Endothelial cell of umbilical vein (primary cell): ENCODE measurements at regions of chr2 and their contacts with region 1.

Region 1: DNA sequence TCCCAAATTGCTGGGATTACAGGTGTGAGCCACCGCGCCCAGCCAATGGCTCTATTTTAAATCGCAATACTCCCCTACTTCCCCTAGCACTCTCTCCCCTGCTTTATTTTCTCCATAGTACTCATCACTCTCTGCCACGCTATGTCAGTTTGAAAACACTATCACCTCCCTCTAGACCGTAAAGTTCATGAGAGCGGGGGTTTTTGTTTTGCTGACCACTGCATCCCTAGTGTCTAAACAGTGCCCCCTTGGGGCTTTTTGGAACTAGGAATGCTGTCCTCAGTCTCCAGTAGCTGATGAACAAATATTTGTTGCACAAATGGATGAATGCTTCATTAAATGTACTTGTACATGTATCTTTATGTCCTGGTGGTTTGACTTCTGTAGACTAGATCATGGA is 44.1 kb downstream of the ATOH8 start:
- DNase-seq: peak; percentile 60
- H3K4me3 ChIP-seq: no peak overlapping the region
- H3K27ac ChIP-seq: no peak overlapping the region
- H3K4me1 ChIP-seq: peaks cover 15% of the 10 kb centered on the region
- H3K27me3 ChIP-seq: no peaks in the 10 kb centered on the region
- CTCF ChIP-seq: peak; percentile 62 to 70
- POLR2A ChIP-seq: no peak

Region 2: DNA sequence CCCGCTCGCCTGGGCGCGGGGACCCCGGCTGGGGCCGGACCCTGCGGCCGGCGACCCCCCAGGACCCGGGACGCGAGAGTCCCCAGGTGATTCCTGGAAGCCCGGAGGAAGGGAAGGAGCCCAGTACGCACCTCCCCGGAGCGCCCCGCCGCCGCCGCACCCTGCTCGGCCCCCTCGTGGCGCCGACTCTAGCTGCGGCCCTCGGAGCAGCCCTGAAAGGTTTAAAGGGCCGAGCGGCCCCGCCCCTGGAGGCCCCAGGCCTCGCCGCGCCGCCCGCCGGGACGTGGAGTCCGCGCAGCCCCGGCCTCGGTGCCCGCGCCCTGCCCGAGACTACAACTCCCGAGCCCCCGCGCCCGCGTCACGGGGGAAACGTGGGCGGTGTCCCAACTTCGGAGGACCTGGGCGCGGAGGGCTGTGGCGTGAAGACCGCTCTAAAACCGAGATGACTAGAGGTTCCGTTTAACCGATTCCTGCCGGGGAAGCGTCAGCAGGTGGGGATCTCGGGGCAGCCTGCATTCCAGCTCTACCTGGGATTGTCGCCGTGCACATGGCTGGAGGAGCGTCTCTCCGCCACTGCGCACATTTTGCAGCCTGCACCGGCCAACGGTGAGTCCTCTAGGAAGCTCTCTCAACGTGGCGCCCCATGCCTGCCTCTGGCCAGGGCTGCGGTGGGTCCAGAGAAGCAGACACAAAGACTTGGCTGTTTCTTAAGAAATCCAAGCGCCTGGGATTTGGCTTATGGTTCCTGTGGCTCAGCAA is 195.3 kb before region 1 on chr2 and contains the start of gene TMEM150A:
- CTCF ChIA-PET with region 1: no interaction called
- POLR2A ChIA-PET with region 1: no interaction called
- dilution Hi-C with region 1: no loop called
- intact Hi-C with region 1: no loop called
- DNase-seq: peak; percentile 88
- H3K4me3 ChIP-seq: peak within 1 kb of the TSS; percentile 64 to 98 (median 65)
- H3K27ac ChIP-seq: peak within 1 kb of the TSS; percentile 23
- H3K4me1 ChIP-seq: peaks cover 24% of the 10 kb centered on the region
- H3K27me3 ChIP-seq: no peaks in the 10 kb centered on the region
- CTCF ChIP-seq: peak; percentile 32 to 51
- POLR2A ChIP-seq: peak; percentile 87
- total RNA-seq, gene TMEM150A: 14.6 and 17.7 TPM in 2 replicates

Region 3: DNA sequence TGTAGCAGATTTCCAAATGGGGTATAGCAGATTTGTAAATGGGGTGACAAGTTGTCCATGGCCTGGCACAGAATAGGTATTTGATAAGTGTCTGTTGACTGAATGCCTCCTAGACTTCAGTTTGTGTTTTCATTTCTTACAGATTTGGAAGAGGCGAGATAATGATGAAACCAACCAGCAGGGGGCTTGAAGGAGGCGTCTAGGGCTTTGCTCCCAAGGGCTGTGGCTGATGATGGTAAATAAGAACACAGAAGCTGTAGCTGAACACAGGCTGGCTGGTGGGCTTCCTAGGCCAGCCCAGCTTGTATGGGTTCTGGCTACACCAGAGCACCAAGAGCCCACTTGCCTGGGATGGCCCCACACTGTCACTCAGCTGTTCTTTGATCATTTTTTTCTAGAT is 149.3 kb before region 1 on chr2:
- CTCF ChIA-PET with region 1: interaction called, 12 read pairs
- POLR2A ChIA-PET with region 1: no interaction called
- dilution Hi-C with region 1: no loop called
- intact Hi-C with region 1: no loop called
- DNase-seq: peak; percentile 66
- H3K4me3 ChIP-seq: no peak overlapping the region
- H3K27ac ChIP-seq: peak overlapping the region; percentile 42
- H3K4me1 ChIP-seq: peaks cover 16% of the 10 kb centered on the region
- H3K27me3 ChIP-seq: no peaks in the 10 kb centered on the region
- CTCF ChIP-seq: peak; percentile 65 to 72
- POLR2A ChIP-seq: no peak

Region 4: GRCh38 chr2:85741833-85742455 is 56.0 kb before region 1 on chr2:
- CTCF ChIA-PET with region 1: interaction called, 17 read pairs
- POLR2A ChIA-PET with region 1: no interaction called
- dilution Hi-C with region 1: no loop called
- intact Hi-C with region 1: no loop called
- DNase-seq: peak; percentile 87
- H3K4me3 ChIP-seq: peak overlapping the region in 1 of 3 experiments; percentile 3
- H3K27ac ChIP-seq: peak overlapping the region; percentile 97
- H3K4me1 ChIP-seq: peaks cover 30% of the 10 kb centered on the region
- H3K27me3 ChIP-seq: no peaks in the 10 kb centered on the region
- CTCF ChIP-seq: no peak
- POLR2A ChIP-seq: no peak

Region 5: DNA sequence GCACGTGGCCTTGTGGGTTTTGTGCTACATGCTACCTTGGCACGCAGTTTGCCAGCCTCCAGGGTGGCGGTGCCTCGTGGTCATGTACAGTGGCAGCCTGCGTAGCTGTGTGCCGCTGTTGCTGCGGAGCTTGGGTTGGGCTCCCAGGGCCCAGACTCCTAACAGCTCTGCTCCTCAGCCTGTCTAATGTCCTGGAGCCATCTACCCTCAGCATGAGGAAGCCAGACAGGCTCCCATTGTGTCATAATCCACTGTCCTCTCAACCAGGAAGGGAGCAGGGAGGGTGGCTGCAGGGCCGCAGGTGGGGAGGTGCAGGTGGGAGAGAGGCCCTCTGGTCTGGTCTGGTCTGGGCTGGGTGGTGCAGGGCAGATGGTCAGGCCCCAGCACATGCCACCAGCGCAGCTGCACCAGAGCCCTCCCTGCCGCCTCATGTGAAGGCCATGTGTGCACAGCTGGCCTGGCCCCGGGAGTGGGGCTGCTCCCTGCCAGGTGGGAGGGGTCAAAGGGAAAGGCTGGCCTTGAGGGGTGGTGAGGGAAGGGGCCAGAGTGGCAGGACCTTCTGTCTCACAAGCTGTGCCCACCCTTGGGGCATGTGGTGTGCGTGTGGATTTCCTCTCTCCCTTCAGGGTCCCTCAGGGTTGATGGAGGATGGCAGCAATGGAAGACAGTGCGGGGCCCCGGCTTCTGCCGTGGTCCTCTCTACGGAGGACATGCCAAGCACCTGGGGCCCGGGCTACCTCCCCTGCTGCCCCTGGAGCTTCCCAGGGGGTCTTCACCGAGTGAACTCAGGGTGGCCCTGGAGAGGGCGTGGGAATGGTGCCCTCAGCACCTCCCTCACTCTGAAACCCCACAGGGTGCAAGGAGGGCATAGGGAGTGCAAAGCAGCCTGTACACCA is 39.3 kb before region 1 on chr2:
- CTCF ChIA-PET with region 1: interaction called, 126 read pairs
- POLR2A ChIA-PET with region 1: interaction called, 9 read pairs
- dilution Hi-C with region 1: no loop called
- intact Hi-C with region 1: no loop called
- DNase-seq: no peak
- H3K4me3 ChIP-seq: no peak overlapping the region
- H3K27ac ChIP-seq: no peak overlapping the region
- H3K4me1 ChIP-seq: peaks cover 13% of the 10 kb centered on the region
- H3K27me3 ChIP-seq: no peaks in the 10 kb centered on the region
- CTCF ChIP-seq: no peak
- POLR2A ChIP-seq: no peak

Region 6: GRCh38 chr2:85772019-85772745 is 25.7 kb before region 1 on chr2:
- CTCF ChIA-PET with region 1: interaction called, 50 read pairs
- POLR2A ChIA-PET with region 1: no interaction called
- dilution Hi-C with region 1: no loop called
- intact Hi-C with region 1: loop called (anchors 1 kb)
- DNase-seq: peak; percentile 100
- H3K4me3 ChIP-seq: no peak overlapping the region
- H3K27ac ChIP-seq: peak overlapping the region; percentile 100
- H3K4me1 ChIP-seq: peaks cover 38% of the 10 kb centered on the region
- H3K27me3 ChIP-seq: no peaks in the 10 kb centered on the region
- CTCF ChIP-seq: peak; percentile 32 to 42
- POLR2A ChIP-seq: peak; percentile 55